Panc1 (cell line): ENCODE measurements at regions of chr10 and their contacts with region 1.

Region 1: DNA sequence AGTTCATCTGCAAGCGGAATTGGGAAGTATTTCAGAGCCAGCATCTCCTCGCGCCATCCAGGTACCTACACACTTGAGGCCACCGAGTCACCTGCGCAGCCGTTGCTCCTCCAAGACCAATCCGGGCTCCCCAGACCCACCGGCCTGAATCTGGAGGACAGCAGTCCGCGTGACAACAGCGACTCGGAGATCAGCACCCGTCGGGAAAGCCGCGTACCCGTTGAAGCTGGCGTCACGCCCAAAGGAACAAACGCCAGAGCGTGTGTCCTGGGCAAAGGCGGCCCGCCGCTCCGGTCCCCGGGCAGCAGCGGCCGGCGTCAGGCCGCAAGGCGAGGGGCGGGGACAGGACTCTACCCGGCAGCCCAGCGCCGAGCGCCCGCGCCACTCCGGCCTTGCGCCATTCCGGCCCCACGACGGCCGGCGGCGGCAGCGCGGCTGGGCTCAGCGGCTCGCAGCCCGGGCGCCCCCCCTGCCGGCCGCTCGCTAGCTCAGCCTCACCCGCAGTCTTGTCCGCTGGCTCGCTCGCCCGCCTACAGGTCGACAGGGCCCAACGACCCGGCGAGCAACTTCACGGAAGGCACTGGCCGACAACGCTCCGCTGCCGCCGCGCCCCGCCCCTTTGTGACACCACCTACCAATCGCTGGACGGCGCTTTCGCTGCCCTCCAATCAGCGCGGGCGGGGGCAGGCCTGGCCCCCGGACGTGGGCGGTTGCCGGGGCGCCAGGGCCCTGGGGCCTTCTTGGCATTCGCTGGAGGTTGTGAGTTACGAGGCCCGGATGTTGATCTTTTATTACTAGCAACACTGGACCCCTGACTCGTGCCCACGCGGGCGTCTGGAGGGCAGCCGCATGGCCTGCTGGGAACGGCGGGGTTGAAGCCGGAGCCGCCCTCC is at the start of gene ZFAND4:
- DNase-seq: peak; percentile 78
- ATAC-seq: peak; percentile 99
- H3K4me3 ChIP-seq: peak within 1 kb of the TSS; percentile 80 to 99
- H3K27ac ChIP-seq: peak within 1 kb of the TSS; percentile 95
- H3K4me1 ChIP-seq: peaks cover 6% of the 10 kb centered on the region; the same call in 1 of the 2 replicates
- H3K27me3 ChIP-seq: no peaks in the 10 kb centered on the region
- CTCF ChIP-seq: peak; percentile 96
- total RNA-seq, gene ZFAND4: 23.6 TPM

Region 2: DNA sequence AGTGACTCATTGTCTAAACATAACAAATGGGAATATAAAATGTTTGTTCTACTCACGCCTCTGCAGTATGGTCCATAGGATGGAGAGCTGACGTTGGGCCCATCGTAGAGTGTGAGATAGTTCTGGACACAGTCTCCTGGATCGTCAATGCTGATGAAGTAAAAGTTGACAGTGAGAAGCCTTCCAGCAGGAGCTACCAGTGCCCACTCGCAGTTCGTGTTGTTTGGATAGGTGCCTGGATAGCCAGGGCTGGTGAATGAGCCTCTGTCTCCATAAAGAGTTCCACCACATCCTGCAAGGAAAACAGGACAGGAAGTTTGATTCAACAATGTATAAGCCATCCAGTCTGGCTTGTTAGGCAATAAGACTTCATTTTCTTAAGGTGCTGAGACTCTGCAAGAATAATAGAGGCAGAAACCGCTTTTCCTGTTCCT is 436.6 kb before region 1 on chr10:
- CTCF ChIA-PET with region 1: interaction called, 11 read pairs
- POLR2A ChIA-PET with region 1: no interaction called
- in situ Hi-C with region 1: no loop called
- intact Hi-C with region 1: no loop called
- DNase-seq: no peak
- ATAC-seq: peak; percentile 73
- H3K4me3 ChIP-seq: peak overlapping the region in 1 of 2 experiments; percentile 0; a peak in 1 of 4 replicates
- H3K27ac ChIP-seq: no peak overlapping the region
- H3K4me1 ChIP-seq: no peaks in the 10 kb centered on the region
- H3K27me3 ChIP-seq: peaks cover 3% of the 10 kb centered on the region; the same call in 1 of the 2 replicates
- CTCF ChIP-seq: no peak

Region 3: DNA sequence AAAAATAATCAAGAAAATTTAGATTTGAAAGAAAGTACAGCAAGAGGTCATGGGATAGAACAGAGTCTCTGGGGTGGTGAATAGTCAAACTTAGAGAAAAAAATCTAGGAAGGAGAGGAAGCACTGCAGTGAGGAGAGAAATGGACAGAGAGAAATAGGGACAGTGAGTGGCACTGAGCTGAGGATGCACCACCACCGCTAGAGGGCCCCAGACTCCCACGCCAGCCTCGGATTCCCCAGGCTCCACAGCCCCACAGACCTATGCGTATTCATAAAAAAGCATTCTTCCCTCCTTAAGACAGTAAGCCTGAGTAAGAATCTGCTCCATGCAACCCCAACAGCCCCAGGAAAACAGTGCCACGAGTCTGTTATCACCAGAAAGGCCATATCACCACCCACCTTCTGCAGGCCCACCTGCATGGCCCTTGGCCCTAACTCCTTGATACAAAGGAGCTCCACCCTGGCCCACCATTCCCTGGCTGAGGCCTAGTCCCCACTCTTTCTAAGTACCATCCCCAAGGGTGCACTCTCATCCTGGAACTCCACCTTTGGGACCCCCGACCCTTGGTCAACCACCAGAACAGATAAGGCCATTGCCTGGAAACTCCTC is 207.4 kb before region 1 on chr10:
- CTCF ChIA-PET with region 1: interaction called, 6 read pairs
- POLR2A ChIA-PET with region 1: no interaction called
- in situ Hi-C with region 1: no loop called
- intact Hi-C with region 1: loop called (anchors 2 kb)
- DNase-seq: peak; percentile 50
- ATAC-seq: peak; percentile 98
- H3K4me3 ChIP-seq: no peak overlapping the region
- H3K27ac ChIP-seq: peak overlapping the region; percentile 52
- H3K4me1 ChIP-seq: peaks cover 39% of the 10 kb centered on the region
- H3K27me3 ChIP-seq: no peaks in the 10 kb centered on the region
- CTCF ChIP-seq: peak; percentile 99

Region 4: GRCh38 chr10:45646384-45647050 is 25.9 kb before region 1 on chr10:
- CTCF ChIA-PET with region 1: no interaction called
- POLR2A ChIA-PET with region 1: no interaction called
- in situ Hi-C with region 1: no loop called
- intact Hi-C with region 1: no loop called
- DNase-seq: no peak
- ATAC-seq: no peak
- H3K4me3 ChIP-seq: no peak overlapping the region
- H3K27ac ChIP-seq: no peak overlapping the region
- H3K4me1 ChIP-seq: no peaks in the 10 kb centered on the region
- H3K27me3 ChIP-seq: no peaks in the 10 kb centered on the region
- CTCF ChIP-seq: no peak

Region 5: GRCh38 chr10:45660876-45661411 is 11.5 kb before region 1 on chr10:
- CTCF ChIA-PET with region 1: no interaction called
- POLR2A ChIA-PET with region 1: no interaction called
- in situ Hi-C with region 1: no loop called
- intact Hi-C with region 1: no loop called
- DNase-seq: no peak
- ATAC-seq: no peak
- H3K4me3 ChIP-seq: no peak overlapping the region
- H3K27ac ChIP-seq: no peak overlapping the region
- H3K4me1 ChIP-seq: no peaks in the 10 kb centered on the region
- H3K27me3 ChIP-seq: no peaks in the 10 kb centered on the region
- CTCF ChIP-seq: no peak